ENCODE measurements at regions of chr1 and their contacts with region 1.

Region 1: GRCh38 chr1:151756291-151756690 is 7.0 kb downstream of the MRPL9 start:
- DNase-seq: no peak
- H3K4me3 ChIP-seq: no peak overlapping the region
- H3K27ac ChIP-seq: no peak overlapping the region
- H3K4me1 ChIP-seq: no peaks in the 10 kb centered on the region
- H3K27me3 ChIP-seq: no peaks in the 10 kb centered on the region
- CTCF ChIP-seq: no peak

Region 2: GRCh38 chr1:151720554-151720953 is 35.7 kb before region 1 on chr1:
- CTCF ChIA-PET with region 1: no interaction called
- POLR2A ChIA-PET with region 1: interaction called, 18 read pairs
- intact Hi-C with region 1: no loop called
- DNase-seq: no peak
- H3K4me3 ChIP-seq: no peak overlapping the region
- H3K27ac ChIP-seq: no peak overlapping the region
- H3K4me1 ChIP-seq: peaks cover 6% of the 10 kb centered on the region; the same call in 1 of the 2 replicates
- H3K27me3 ChIP-seq: peaks cover 31% of the 10 kb centered on the region
- CTCF ChIP-seq: no peak

Region 3: DNA sequence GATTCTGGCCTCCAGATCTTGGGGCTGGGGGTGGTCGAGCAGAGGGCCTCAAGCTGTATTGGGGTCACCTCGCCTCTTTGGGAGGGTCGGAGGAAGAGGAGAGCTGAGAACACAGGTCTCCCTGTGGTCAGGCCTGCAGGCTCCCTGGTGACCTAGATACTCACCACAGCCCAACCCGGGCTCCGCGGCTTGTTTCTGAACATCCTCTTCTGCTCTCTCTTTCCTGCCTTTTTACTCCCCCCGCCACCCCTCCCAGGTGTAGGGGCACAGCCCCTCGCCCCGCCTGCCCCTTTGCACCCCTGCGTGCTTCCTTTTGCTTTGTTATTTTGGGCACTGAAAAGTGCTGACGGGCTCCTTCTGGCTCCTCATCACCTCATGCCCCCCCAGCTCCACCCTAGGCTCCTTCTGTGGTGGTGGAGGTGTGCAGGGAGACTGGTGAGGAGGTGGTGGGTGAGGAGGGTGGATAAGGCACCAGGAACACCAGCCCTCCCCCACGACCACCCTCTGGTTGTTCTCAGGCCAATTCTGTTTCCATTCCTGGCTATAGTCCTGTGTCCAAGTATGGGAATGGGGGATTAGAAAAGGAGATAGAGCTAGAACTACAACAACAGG is 59.5 kb after region 1 on chr1:
- CTCF ChIA-PET with region 1: no interaction called
- POLR2A ChIA-PET with region 1: no interaction called
- intact Hi-C with region 1: no loop called
- DNase-seq: no peak
- H3K4me3 ChIP-seq: no peak overlapping the region
- H3K27ac ChIP-seq: no peak overlapping the region
- H3K4me1 ChIP-seq: peaks cover 12% of the 10 kb centered on the region
- H3K27me3 ChIP-seq: no peaks in the 10 kb centered on the region
- CTCF ChIP-seq: no peak

Measured in PC-9 (cell line).